HepG2 (cell line): ENCODE measurements at regions of chr13 and their contacts with region 1.

Region 1: DNA sequence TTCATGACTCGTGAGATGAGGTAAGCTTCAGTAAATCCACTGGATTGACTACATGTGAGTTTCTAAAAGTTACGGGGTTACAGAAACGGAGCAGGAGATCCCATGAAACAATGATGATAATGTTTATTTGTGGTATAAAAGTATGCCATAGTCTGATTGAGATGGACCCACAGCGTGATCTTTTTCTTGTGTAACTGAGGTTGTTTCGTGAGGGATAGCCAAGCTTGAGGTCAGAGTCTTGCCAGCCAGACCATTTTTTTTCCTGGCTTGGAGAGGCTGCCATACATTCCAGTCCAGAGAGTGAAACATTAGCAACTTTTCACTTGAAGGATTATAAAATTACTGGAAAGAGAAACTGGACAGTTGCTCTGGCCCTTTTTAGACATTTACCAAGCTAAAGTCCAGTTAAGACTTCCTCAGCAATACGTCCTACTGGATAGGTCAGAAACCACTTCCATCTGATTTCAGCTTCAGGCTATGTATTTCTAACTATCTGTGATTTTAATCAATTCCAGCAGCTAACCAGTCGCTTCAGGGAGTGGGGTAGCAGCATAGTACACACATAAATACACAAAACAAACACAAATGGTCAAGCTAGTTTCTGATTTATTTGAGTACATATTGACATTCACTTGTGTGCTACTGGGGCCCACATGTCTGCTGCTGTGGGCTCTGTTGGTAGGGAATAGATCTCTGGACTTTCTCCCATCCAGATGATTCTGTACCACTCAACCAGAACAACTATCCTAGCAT is 194.6 kb downstream of the POSTN start:
- DNase-seq: no peak
- ATAC-seq: no peak
- H3K4me3 ChIP-seq: no peak overlapping the region
- H3K27ac ChIP-seq: no peak overlapping the region
- H3K4me1 ChIP-seq: no peaks in the 10 kb centered on the region
- H3K27me3 ChIP-seq: no peaks in the 10 kb centered on the region
- CTCF ChIP-seq: no peak
- EP300 ChIP-seq: no peak
- POLR2A ChIP-seq: no peak
- RAD21 ChIP-seq: no peak

Region 2: DNA sequence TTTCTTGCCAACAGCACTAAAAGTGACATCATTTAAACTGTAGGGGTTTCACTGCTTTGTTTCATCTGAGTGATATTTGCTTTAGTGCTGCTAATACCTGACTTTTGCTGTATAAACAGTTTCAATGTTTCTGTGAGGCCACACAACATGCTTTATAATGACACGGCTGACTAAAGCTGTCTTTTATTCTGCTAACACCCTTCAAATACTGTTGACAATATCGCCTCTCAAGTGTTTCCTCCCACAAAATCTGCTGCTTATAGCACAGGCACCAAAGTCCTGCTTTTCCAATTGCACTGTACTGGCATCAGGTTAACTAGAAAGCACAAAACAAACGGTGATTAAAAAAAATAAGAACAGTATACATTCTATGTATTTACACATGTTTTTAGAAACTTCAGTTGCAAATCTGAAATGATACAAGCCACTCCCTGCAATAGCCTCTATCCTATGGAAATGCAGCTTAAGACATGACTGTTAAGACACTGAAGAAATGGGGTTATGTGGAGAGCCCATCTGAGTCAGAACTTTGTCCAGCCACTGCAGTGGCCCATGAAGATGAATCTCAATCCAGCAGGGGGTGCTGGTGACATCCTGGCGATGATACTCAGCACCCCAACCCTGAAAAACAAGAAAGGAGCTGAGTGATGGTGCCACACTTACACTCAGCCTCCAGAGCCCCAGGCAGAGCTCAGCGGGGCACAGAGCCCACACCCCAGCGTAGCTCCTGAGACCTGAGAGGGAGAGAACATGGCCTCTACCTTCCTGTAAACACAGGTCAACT is 555.6 kb before region 1 on chr13:
- CTCF ChIA-PET with region 1: no interaction called
- POLR2A ChIA-PET with region 1: no interaction called
- in situ Hi-C with region 1: no loop called
- intact Hi-C with region 1: no loop called
- DNase-seq: no peak
- ATAC-seq: peak; percentile 74
- H3K4me3 ChIP-seq: no peak overlapping the region
- H3K27ac ChIP-seq: no peak overlapping the region
- H3K4me1 ChIP-seq: no peaks in the 10 kb centered on the region
- H3K27me3 ChIP-seq: no peaks in the 10 kb centered on the region
- CTCF ChIP-seq: peak; percentile 55
- EP300 ChIP-seq: no peak
- POLR2A ChIP-seq: no peak
- RAD21 ChIP-seq: no peak

Region 3: GRCh38 chr13:37361608-37362007 is 42.3 kb before region 1 on chr13:
- CTCF ChIA-PET with region 1: no interaction called
- POLR2A ChIA-PET with region 1: no interaction called
- in situ Hi-C with region 1: no loop called
- intact Hi-C with region 1: loop called (anchors 1 kb)
- DNase-seq: no peak
- ATAC-seq: no peak
- H3K4me3 ChIP-seq: no peak overlapping the region
- H3K27ac ChIP-seq: no peak overlapping the region
- H3K4me1 ChIP-seq: no peaks in the 10 kb centered on the region
- H3K27me3 ChIP-seq: no peaks in the 10 kb centered on the region
- CTCF ChIP-seq: no peak
- EP300 ChIP-seq: no peak
- POLR2A ChIP-seq: no peak
- RAD21 ChIP-seq: no peak

Region 4: GRCh38 chr13:37416291-37417059 is 12.5 kb after region 1 on chr13:
- CTCF ChIA-PET with region 1: no interaction called
- POLR2A ChIA-PET with region 1: no interaction called
- in situ Hi-C with region 1: no loop called
- intact Hi-C with region 1: no loop called
- DNase-seq: no peak
- ATAC-seq: no peak
- H3K4me3 ChIP-seq: no peak overlapping the region
- H3K27ac ChIP-seq: no peak overlapping the region
- H3K4me1 ChIP-seq: no peaks in the 10 kb centered on the region
- H3K27me3 ChIP-seq: no peaks in the 10 kb centered on the region
- CTCF ChIP-seq: no peak
- EP300 ChIP-seq: no peak
- POLR2A ChIP-seq: no peak
- RAD21 ChIP-seq: no peak